CD4-positive, alpha-beta T cell (primary cell): ENCODE measurements at regions of chr15 and their contacts with region 1.

Region 1: DNA sequence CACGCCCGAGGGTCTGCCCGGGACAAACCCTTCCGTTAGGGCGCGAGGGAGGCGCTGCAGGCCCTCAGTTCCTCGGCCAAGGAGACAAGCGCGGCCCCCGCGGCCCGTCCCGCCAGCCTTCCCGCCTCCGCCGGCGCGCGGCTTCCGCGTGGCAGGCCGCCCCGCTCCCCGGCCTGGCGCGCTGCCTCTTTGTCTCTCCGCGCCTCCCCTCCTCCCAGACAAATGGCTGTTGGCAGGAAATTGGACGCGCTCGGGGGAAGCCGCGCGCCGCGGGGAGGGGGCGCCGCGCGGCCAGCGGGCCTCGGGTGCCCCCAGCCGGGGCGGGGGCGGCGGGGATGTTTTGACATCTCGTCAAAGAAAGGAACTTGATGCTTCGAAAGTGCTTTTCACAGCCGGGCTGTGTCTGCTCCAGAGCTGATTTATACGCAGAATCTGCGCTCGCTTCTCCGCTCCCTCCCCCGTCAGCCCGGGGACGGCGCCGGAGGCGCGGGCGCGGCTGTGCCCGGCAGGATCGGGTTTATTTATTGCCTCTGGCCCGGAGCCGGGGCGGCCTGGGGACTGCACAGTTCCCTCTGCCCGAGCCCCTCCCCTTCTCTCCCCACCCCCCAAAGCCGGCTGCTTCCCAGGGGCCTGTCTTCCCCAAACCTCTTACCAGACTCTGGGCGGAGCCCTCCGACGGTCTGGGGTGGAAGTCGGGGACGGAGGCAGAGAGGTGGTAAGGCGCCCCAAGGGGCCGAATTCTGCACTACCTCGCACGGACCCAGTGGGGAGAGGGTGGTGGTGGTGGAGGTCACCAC is 20.7 kb downstream of the SHF start:
- DNase-seq: peak; percentile 69 to 91 (median 78)
- ATAC-seq: peak; percentile 90
- H3K4me3 ChIP-seq: peak overlapping the region; percentile 78
- H3K4me3 Mint-ChIP-seq: peak overlapping the region; percentile 85
- H3K27ac ChIP-seq: peak overlapping the region; percentile 73 to 83
- H3K27ac Mint-ChIP-seq: peak overlapping the region; percentile 89
- H3K4me1 ChIP-seq: peaks cover 29% of the 10 kb centered on the region
- H3K4me1 Mint-ChIP-seq: peaks cover 15% of the 10 kb centered on the region
- H3K27me3 ChIP-seq: no peaks in the 10 kb centered on the region
- H3K27me3 Mint-ChIP-seq: no peaks in the 10 kb centered on the region
- CTCF ChIP-seq: peak; percentile 65

Region 2: DNA sequence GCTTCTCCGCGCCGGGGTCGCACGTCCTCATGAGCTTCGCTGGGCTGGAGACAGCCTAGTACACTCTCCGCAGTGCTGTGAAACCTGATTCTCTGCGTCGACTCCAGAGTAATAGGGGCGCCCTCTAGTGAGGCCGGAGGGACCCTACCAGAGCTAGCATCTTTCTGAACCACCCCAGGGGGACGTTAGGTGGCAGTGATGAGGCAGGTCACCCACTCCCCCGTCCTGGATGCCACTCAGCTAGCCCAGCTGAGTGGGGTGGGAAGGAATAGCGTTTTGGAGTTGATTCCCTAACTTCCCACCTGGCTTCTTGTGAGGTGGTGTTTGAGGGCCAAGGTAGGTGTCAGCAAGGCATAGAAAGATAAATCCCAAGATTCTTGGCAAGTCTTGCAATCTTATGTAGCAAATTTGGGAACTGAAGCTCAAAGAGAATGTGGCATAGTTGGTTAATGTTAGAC is 48.9 kb before region 1 on chr15:
- CTCF ChIA-PET with region 1: interaction called, 10 read pairs
- POLR2A ChIA-PET with region 1: no interaction called
- intact Hi-C with region 1: loop called in 1 of 2 experiments (anchors 5 kb)
- DNase-seq: peak; percentile 70 to 91 (median 80)
- ATAC-seq: peak; percentile 99
- H3K4me3 ChIP-seq: peak overlapping the region; percentile 29
- H3K4me3 Mint-ChIP-seq: peak overlapping the region; percentile 88
- H3K27ac ChIP-seq: no peak overlapping the region
- H3K27ac Mint-ChIP-seq: no peak overlapping the region
- H3K4me1 ChIP-seq: peaks cover 39% of the 10 kb centered on the region
- H3K4me1 Mint-ChIP-seq: peaks cover 43% of the 10 kb centered on the region
- H3K27me3 ChIP-seq: peaks cover 58 to 59% of the 10 kb centered on the region in 2 experiments
- H3K27me3 Mint-ChIP-seq: peaks cover 80% of the 10 kb centered on the region
- CTCF ChIP-seq: peak; percentile 100

Region 3: DNA sequence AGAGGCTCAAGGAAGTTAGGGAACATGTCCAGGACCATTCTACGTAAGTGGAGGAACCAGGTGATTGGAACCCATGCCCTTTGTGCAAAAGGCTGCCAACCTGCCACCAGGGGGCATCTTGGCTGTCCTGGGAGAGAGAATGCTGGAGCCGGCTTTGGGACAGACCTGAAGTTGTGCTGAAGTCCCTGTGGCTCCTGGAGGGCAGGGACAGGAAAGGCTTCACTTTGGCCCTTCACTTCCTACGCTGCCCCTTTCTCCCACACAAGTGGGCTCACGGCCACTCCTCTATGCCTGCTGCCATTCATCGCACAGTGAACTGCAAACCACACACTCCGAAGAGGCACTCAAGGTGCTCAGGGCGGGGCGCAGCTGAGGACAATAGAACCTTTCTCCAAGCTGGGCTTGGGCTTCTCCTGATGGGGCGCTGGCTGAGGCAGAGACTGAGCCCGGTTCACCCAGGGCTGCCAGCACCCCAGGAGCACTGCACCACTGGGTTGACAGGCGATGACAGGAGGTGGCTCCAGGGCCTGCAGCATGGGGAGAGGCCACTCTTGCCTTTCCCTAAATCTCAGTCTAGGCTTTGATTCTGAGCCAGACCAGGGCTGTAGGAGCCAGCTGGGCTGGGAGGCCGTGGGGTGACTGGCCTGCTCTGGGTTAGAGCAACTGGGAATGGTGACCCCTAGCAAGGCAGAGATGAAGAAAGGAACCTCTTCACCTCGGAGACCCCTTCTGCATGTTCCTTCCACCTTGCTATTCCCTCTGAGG is 12.4 kb after region 1 on chr15:
- CTCF ChIA-PET with region 1: interaction called, 13 read pairs
- POLR2A ChIA-PET with region 1: interaction called, 9 read pairs
- intact Hi-C with region 1: no loop called
- DNase-seq: peak in 11 of 14 experiments; percentile 31 to 79 (median 50)
- ATAC-seq: peak; percentile 51
- H3K4me3 ChIP-seq: no peak overlapping the region
- H3K4me3 Mint-ChIP-seq: no peak overlapping the region
- H3K27ac ChIP-seq: no peak overlapping the region
- H3K27ac Mint-ChIP-seq: no peak overlapping the region
- H3K4me1 ChIP-seq: peaks cover 15% of the 10 kb centered on the region
- H3K4me1 Mint-ChIP-seq: peaks cover 7% of the 10 kb centered on the region
- H3K27me3 ChIP-seq: no peaks in the 10 kb centered on the region
- H3K27me3 Mint-ChIP-seq: no peaks in the 10 kb centered on the region
- CTCF ChIP-seq: peak; percentile 42

Region 4: DNA sequence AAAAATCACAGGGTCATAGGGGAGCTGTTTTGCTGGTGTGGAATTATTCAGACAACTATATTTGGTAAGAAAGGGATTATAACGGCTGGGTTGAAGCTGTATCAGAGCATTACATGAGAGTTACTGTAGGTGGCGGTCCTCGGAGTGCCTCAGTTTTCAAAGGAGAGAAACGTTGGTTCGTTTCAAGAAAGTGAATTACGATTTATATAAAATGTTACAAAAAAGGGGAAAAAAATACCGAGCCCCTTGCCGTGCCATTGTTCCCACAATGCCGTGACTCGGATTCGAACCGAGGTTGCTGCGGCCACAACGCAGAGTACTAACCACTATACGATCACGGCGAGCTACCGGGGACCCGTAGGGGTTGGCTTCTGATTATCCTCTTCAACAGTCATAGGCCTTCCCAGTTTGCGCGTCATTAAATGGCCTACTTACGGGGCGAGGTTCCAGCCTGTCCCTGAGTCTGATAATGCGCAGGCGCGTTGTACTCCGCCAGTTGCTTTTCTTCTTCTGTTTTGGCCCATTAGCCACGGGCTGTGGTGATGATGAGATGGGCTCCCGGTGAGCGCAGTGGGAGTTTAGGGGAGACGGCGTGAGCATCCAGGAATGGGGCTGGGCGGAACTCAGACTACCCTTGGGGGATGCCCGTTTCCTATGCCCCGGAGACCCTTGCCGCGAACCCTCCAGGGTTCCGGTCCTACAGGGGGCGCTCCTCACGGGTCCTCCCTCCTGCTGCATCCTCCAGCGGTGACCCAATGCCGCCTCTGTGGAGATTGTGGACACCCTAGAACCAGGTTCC is 31.5 kb after region 1 on chr15:
- CTCF ChIA-PET with region 1: interaction called, 14 read pairs
- POLR2A ChIA-PET with region 1: interaction called, 53 read pairs
- intact Hi-C with region 1: loop called (anchors 1 kb)
- DNase-seq: peak; percentile 84 to 99 (median 94)
- ATAC-seq: peak; percentile 61
- H3K4me3 ChIP-seq: peak overlapping the region; percentile 88
- H3K4me3 Mint-ChIP-seq: no peak overlapping the region
- H3K27ac ChIP-seq: peak overlapping the region; percentile 91 to 94
- H3K27ac Mint-ChIP-seq: no peak overlapping the region
- H3K4me1 ChIP-seq: peaks cover 36% of the 10 kb centered on the region
- H3K4me1 Mint-ChIP-seq: no peaks in the 10 kb centered on the region
- H3K27me3 ChIP-seq: no peaks in the 10 kb centered on the region
- H3K27me3 Mint-ChIP-seq: peaks cover 16% of the 10 kb centered on the region
- CTCF ChIP-seq: peak; percentile 46

Region 5: GRCh38 chr15:45279024-45279698 is 112.1 kb after region 1 on chr15:
- CTCF ChIA-PET with region 1: interaction called, 7 read pairs
- POLR2A ChIA-PET with region 1: no interaction called
- intact Hi-C with region 1: loop called in 1 of 2 experiments (anchors 1 kb)
- DNase-seq: peak; percentile 94 to 99 (median 96)
- ATAC-seq: peak; percentile 99
- H3K4me3 ChIP-seq: peak overlapping the region; percentile 60
- H3K4me3 Mint-ChIP-seq: peak overlapping the region; percentile 89
- H3K27ac ChIP-seq: peak overlapping the region; percentile 66 to 74
- H3K27ac Mint-ChIP-seq: peak overlapping the region; percentile 86
- H3K4me1 ChIP-seq: peaks cover 16% of the 10 kb centered on the region
- H3K4me1 Mint-ChIP-seq: peaks cover 19% of the 10 kb centered on the region
- H3K27me3 ChIP-seq: no peaks in the 10 kb centered on the region
- H3K27me3 Mint-ChIP-seq: peaks cover under 1% of the 10 kb centered on the region
- CTCF ChIP-seq: no peak

Region 6: DNA sequence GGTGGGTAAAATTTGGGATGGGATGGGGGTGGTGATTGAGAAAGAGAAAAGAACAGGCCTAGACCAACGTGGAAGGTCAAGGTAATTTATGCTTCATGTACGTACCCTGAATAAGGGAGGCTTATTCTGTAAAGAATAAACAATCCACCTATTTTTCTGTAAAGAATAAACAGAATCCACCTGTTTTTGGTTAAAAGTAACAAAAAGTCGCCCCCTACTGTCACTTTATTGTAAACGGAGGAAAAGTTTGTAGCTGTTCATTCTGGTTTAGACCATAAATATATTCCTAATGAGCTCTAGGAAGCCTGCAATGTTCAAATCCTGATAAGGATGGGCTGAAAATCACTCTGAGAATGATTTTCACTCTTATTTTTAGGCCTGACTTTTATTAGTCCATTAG is 444.3 kb after region 1 on chr15:
- CTCF ChIA-PET with region 1: no interaction called
- POLR2A ChIA-PET with region 1: no interaction called
- intact Hi-C with region 1: loop called in 1 of 2 experiments (anchors 10 kb)
- DNase-seq: peak in 3 of 14 experiments; percentile 30 to 37 (median 33)
- ATAC-seq: no peak
- H3K4me3 ChIP-seq: no peak overlapping the region
- H3K4me3 Mint-ChIP-seq: no peak overlapping the region
- H3K27ac ChIP-seq: no peak overlapping the region
- H3K27ac Mint-ChIP-seq: no peak overlapping the region
- H3K4me1 ChIP-seq: no peaks in the 10 kb centered on the region
- H3K4me1 Mint-ChIP-seq: no peaks in the 10 kb centered on the region
- H3K27me3 ChIP-seq: no peaks in the 10 kb centered on the region
- H3K27me3 Mint-ChIP-seq: no peaks in the 10 kb centered on the region
- CTCF ChIP-seq: peak; percentile 50